ENCODE measurements at regions of chr12 and their contacts with region 1.

Region 1: DNA sequence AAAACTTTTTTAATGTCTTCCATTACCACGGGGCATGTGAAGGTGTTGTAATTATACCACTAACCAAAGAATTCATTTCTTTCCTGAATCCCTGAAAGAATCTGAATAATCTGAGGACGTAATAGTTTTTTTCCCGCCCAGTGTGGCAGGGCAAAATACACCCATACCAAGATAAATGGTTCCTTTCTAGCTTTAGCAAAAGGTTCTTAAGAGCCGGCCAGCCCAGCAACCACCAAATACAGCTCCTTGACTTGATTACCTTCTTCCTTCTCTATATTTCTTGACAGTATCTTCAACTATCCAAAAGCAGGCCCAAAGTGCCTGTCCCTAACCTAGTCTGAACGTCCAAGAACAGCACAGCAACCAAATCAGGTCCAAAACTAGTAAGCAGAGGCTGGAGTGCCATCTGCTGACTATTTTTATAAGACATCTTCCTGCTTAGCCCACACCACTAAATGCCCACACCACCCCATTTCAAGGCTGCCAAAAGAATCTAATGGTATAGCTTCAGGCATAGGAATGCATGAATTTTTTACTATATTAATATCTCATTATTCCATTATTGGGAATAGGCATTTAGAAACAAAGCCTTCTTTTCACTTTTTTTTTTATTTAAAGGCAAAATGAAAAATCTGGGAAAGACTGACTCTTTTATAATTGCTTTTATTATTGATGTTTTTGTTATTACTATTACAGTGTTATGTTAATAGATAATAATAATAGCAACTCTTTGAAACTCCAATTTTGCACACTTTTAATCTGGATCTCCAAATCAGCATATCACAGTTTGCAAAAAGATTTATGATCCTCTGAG is 524.4 kb downstream of the MED13L start:
- DNase-seq: peak; percentile 70
- H3K4me3 ChIP-seq: no peak overlapping the region
- H3K27ac ChIP-seq: no peak overlapping the region
- H3K4me1 ChIP-seq: no peaks in the 10 kb centered on the region
- H3K27me3 ChIP-seq: no peaks in the 10 kb centered on the region
- CTCF ChIP-seq: peak; percentile 58 to 67 (median 65)
- POLR2A ChIP-seq: no peak

Region 2: GRCh38 chr12:114668151-114668885 is 1084.8 kb before region 1 on chr12:
- intact Hi-C with region 1: loop called (anchors 5 kb)
- DNase-seq: peak; percentile 89
- H3K4me3 ChIP-seq: peak overlapping the region; percentile 7 to 32
- H3K27ac ChIP-seq: no peak overlapping the region
- H3K4me1 ChIP-seq: peaks cover 13% of the 10 kb centered on the region
- H3K27me3 ChIP-seq: no peaks in the 10 kb centered on the region
- CTCF ChIP-seq: peak; percentile 27 to 71 (median 28)
- POLR2A ChIP-seq: no peak

Region 3: GRCh38 chr12:115687094-115687493 is 66.0 kb before region 1 on chr12:
- intact Hi-C with region 1: no loop called
- DNase-seq: no peak
- H3K4me3 ChIP-seq: no peak overlapping the region
- H3K27ac ChIP-seq: no peak overlapping the region
- H3K4me1 ChIP-seq: no peaks in the 10 kb centered on the region
- H3K27me3 ChIP-seq: no peaks in the 10 kb centered on the region
- CTCF ChIP-seq: no peak
- POLR2A ChIP-seq: no peak

Measured in testis (tissue), 5 donors.